Mammary epithelial cell (primary cell): ENCODE measurements at regions of chr12 and their contacts with region 1.

Region 1: GRCh38 chr12:45990468-45991283 is at the start of gene SCAF11:
- DNase-seq: peak; percentile 100
- H3K4me3 ChIP-seq: peak within 1 kb of the TSS; percentile 53 to 96 (median 67)
- H3K27ac ChIP-seq: peak within 1 kb of the TSS; percentile 83
- H3K4me1 ChIP-seq: peaks cover 23% of the 10 kb centered on the region
- H3K27me3 ChIP-seq: no peaks in the 10 kb centered on the region
- CTCF ChIP-seq: peak; percentile 92 to 95
- total RNA-seq, gene SCAF11: 99.2 to 100 TPM

Region 2: GRCh38 chr12:45762185-45763110 is 228.2 kb before region 1 on chr12:
- CTCF ChIA-PET with region 1: interaction called, 3 read pairs
- dilution Hi-C with region 1: no loop called
- in situ Hi-C with region 1: no loop called
- intact Hi-C with region 1: loop called (anchors 1 kb)
- DNase-seq: peak; percentile 60
- H3K4me3 ChIP-seq: no peak overlapping the region
- H3K27ac ChIP-seq: no peak overlapping the region
- H3K4me1 ChIP-seq: peaks cover 2% of the 10 kb centered on the region
- H3K27me3 ChIP-seq: no peaks in the 10 kb centered on the region
- CTCF ChIP-seq: peak; percentile 69 to 73

Region 3: DNA sequence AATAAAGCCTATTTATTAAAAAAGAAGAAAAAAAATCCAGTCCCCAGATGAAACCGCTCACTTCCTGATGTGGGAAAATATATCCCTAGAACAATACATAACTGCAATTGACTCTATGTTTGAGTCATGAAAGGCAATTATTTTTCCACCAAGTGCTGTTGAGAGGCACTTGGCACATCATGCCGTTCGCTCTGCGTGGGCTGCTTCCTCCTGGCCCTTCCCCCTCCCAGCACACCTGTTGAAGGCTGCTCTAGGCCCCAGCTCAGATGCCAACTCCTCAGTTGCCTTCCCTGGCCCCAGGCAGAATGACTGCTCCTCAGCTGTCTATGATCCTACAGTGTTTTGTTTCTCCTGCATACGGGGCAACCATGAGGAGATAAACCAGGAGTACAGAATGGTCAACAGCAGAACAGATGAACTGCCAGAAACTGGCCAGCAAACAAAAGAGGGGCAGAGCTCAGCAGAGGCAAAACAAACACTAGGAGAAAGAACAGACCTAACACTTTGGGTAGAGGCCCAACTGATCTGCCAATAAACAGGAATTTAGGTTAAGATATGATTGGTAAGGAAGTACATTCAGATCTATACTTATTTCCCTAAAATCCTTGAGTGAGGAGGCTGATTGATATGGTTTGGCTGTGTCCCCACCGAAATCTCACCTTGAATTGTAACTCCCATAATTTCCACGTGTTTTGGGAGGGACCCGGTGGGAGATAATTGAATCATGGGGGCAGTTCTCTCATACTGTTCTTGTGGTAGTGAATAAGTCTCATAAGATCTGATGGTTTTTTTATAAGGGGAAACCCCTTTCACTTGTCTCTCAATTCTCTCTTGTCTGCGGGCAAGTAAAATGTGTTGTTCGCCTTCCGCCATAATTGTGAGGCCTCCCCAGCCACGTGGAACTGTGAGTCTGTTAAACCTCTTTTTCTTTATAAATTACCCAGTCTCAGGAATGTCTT is 219.5 kb after region 1 on chr12:
- CTCF ChIA-PET with region 1: no interaction called
- dilution Hi-C with region 1: no loop called
- in situ Hi-C with region 1: no loop called
- intact Hi-C with region 1: loop called (anchors 10 kb)
- DNase-seq: peak; percentile 96
- H3K4me3 ChIP-seq: no peak overlapping the region
- H3K27ac ChIP-seq: peak overlapping the region; percentile 87
- H3K4me1 ChIP-seq: peaks cover 28% of the 10 kb centered on the region
- H3K27me3 ChIP-seq: no peaks in the 10 kb centered on the region
- CTCF ChIP-seq: no peak

Region 4: DNA sequence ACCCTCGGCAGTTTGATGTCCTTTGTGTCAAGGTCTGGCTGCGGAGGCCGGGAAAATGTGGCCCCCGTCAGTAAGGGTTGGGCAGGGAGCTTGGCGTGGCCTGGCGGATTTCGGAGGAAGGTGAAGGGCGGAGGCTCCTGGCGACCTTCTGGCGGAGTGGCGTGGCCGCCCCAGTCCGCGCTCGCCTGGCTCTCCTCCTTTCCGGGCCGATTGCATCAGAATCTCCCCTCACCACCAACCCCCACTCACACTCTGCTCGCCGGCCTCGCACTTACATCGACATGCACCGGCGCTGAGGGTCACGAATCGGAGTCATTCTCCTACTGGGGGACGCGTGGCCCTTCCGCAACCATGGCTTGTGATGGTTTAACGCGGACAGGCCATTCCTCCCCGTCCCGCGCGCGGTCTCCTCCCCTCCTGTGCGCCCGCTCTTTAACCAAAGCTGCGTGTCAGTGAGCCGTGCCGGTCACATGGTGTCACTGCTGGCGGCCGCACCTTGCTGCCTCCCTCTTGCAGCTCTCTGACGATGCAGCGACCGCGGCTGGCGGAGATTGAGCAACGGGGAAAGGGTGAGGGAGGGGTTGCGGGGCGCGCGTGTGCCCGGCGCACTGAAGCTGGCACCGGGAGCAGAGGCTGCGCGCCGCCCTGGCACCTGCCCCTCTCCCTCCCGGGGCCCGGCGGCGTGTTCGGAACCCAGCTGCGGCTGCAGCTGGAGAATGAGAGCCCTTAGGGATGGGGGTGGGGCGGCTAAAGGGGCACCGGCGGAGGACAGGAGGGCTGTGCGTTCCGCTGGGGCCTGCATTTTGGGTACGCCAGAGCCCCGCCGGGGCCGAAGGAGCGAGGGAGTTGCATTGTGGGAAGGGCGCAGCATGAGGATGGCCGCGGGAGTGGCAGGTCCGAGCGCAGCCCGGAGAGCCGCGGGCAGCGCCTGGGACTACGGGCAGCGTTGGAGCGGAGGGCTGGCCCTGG is 278.2 kb after region 1 on chr12 and contains the start of gene SLC38A1:
- CTCF ChIA-PET with region 1: no interaction called
- dilution Hi-C with region 1: no loop called
- in situ Hi-C with region 1: no loop called
- intact Hi-C with region 1: loop called (anchors 5 kb)
- DNase-seq: peak; percentile 88
- H3K4me3 ChIP-seq: peak within 1 kb of the TSS; percentile 51 to 97 (median 95)
- H3K27ac ChIP-seq: peak within 1 kb of the TSS; percentile 96
- H3K4me1 ChIP-seq: peaks cover 31% of the 10 kb centered on the region
- H3K27me3 ChIP-seq: no peaks in the 10 kb centered on the region
- CTCF ChIP-seq: peak in 1 of 2 donors; percentile 17
- total RNA-seq, gene SLC38A1: 208 to 360 TPM

Region 5: GRCh38 chr12:46357438-46358324 is 367.0 kb after region 1 on chr12:
- CTCF ChIA-PET with region 1: no interaction called
- dilution Hi-C with region 1: no loop called
- in situ Hi-C with region 1: no loop called
- intact Hi-C with region 1: loop called (anchors 1 kb)
- DNase-seq: peak; percentile 87
- H3K4me3 ChIP-seq: no peak overlapping the region
- H3K27ac ChIP-seq: peak overlapping the region; percentile 13
- H3K4me1 ChIP-seq: peaks cover 28% of the 10 kb centered on the region
- H3K27me3 ChIP-seq: no peaks in the 10 kb centered on the region
- CTCF ChIP-seq: no peak

Region 6: GRCh38 chr12:46556105-46556559 is 565.5 kb after region 1 on chr12:
- CTCF ChIA-PET with region 1: no interaction called
- dilution Hi-C with region 1: no loop called
- in situ Hi-C with region 1: no loop called
- intact Hi-C with region 1: loop called (anchors 5 kb)
- DNase-seq: peak; percentile 89
- H3K4me3 ChIP-seq: no peak overlapping the region
- H3K27ac ChIP-seq: peak overlapping the region; percentile 99
- H3K4me1 ChIP-seq: peaks cover 84% of the 10 kb centered on the region
- H3K27me3 ChIP-seq: no peaks in the 10 kb centered on the region
- CTCF ChIP-seq: no peak